ENCODE measurements at regions of chr5 and their contacts with region 1.

Region 1: GRCh38 chr5:96662725-96663513 is 743 bp downstream of the CAST start:
- DNase-seq: peak; percentile 89 to 93
- H3K4me3 ChIP-seq: peak overlapping the region; percentile 90
- H3K4me3 Mint-ChIP-seq: peak overlapping the region; percentile 81
- H3K27ac Mint-ChIP-seq: peak overlapping the region; percentile 86
- H3K4me1 ChIP-seq: peaks cover 45% of the 10 kb centered on the region
- H3K4me1 Mint-ChIP-seq: peaks cover 34% of the 10 kb centered on the region
- H3K27me3 ChIP-seq: no peaks in the 10 kb centered on the region
- H3K27me3 Mint-ChIP-seq: no peaks in the 10 kb centered on the region
- CTCF ChIP-seq: peak in 1 of 2 experiments; percentile 3

Region 2: GRCh38 chr5:96626956-96627355 is 36.0 kb before region 1 on chr5:
- CTCF ChIA-PET with region 1: no interaction called
- POLR2A ChIA-PET with region 1: interaction called, 5 read pairs
- intact Hi-C with region 1: loop called (anchors 1 kb)
- DNase-seq: no peak
- H3K4me3 ChIP-seq: no peak overlapping the region
- H3K4me3 Mint-ChIP-seq: no peak overlapping the region
- H3K27ac Mint-ChIP-seq: peak overlapping the region; percentile 10
- H3K4me1 ChIP-seq: peaks cover 35% of the 10 kb centered on the region
- H3K4me1 Mint-ChIP-seq: peaks cover 48% of the 10 kb centered on the region
- H3K27me3 ChIP-seq: no peaks in the 10 kb centered on the region
- H3K27me3 Mint-ChIP-seq: no peaks in the 10 kb centered on the region
- CTCF ChIP-seq: no peak

Region 3: DNA sequence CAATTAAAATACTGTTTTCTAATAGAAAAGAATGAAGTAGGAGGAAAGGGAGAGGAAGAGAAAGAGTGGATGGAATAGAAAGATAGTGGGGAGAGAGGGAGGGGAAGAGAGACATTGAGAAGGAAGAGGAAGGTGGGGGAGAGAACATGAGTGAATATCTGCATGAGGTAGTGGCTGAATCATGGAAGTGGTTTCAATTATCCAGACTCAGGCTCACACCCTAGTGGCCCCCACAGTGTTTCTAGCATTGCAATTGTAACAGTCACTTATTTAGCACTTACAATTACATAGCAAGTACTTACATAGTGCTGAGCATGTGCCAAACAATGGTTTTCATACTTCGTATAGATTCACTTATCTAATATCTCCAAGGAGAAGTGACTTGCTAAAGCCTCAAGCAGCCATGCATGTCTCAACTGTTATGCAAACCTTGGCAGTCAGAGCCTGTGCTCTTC is 72.0 kb after region 1 on chr5:
- CTCF ChIA-PET with region 1: no interaction called
- POLR2A ChIA-PET with region 1: no interaction called
- intact Hi-C with region 1: loop called (anchors 2 kb)
- DNase-seq: no peak
- H3K4me3 ChIP-seq: no peak overlapping the region
- H3K4me3 Mint-ChIP-seq: no peak overlapping the region
- H3K27ac Mint-ChIP-seq: no peak overlapping the region
- H3K4me1 ChIP-seq: peaks cover 18% of the 10 kb centered on the region
- H3K4me1 Mint-ChIP-seq: peaks cover 22% of the 10 kb centered on the region
- H3K27me3 ChIP-seq: no peaks in the 10 kb centered on the region
- H3K27me3 Mint-ChIP-seq: no peaks in the 10 kb centered on the region
- CTCF ChIP-seq: no peak